RWPE1 (cell line): ENCODE measurements at regions of chr1 and their contacts with region 1.

Region 1: DNA sequence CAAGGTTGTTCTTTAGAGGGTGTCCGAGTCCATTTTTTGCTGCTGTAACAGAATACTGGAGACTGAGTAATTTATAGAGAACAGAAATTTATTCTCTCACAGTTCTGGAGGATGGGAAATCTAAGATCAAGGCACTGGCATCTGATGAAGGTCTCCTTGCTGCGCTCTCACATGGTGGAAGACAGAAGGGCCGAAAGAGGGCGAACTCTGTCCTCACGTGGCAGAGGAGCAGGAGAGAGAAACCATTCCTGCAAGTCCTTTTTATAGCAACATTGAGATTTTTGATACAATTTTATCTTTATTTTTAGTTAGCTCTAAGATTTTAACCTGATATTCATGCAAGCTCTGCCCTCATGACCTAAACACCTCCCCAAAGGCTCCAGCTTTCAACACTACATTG is 48.3 kb downstream of the ATG4C start:
- DNase-seq: no peak
- H3K27ac ChIP-seq: no peak overlapping the region
- CTCF ChIP-seq: no peak

Region 2: DNA sequence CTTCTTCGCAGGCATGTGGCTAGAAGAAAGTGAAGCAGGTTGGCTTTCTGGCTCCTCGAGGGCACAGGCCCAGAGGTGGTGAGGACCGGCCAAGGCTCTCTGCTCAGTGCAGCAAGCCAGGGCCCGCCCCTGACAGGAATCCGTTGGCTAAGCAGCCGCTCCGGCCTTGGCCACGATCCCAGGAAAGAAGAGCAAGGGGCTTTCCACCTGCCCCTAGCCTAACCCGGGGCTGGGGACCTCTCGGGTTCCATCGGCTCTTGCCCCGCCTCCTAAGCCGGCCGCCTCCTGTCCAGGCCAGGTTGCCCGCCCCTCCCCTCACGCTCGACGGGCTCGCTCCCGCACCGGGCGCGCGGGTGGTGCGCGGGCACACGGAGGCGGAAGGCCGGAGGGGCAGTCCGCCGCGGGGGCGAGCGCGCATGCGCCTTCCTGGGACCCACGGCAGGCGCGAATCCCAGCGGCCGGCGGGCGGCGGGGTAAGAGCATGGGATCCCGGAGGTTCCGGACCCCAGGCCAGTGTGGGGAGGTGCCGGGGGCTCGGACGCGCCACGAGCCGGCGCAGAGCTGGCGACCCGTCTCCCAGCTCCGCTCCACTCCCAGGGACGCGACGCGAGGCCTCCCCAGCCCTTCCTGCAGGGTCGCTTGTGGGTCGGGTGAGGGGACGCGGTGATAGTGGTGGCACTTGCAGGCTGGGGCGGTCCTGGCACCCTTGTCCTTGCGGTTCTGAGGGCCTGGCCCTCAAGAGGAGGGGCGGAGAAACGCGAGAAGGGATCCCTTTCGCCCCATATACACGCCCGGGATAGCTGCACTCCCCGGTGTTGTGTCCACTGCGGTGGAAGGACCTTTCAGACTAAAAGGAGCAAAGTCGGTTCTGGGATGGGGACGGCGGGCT is 535.2 kb after region 1 on chr1 and contains the start of gene ALG6:
- CTCF ChIA-PET with region 1: interaction called, 10 read pairs
- POLR2A ChIA-PET with region 1: no interaction called
- DNase-seq: peak; percentile 96
- H3K27ac ChIP-seq: peak within 1 kb of the TSS; percentile 82
- CTCF ChIP-seq: no peak